ENCODE measurements at regions of chr1 and their contacts with region 1.

Region 1: GRCh38 chr1:174769961-174770549 is 229.7 kb upstream of the CACYBP start:
- DNase-seq: peak; percentile 37
- ATAC-seq: no peak
- H3K4me3 ChIP-seq: no peak overlapping the region
- H3K27ac ChIP-seq: no peak overlapping the region
- H3K4me1 ChIP-seq: no peaks in the 10 kb centered on the region
- H3K27me3 ChIP-seq: no peaks in the 10 kb centered on the region
- CTCF ChIP-seq: peak; percentile 62 to 84 (median 82); a peak in 5 of 6 replicates
- POLR2A ChIP-seq: no peak
- RAD21 ChIP-seq: peak; percentile 87

Region 2: GRCh38 chr1:174982971-174983689 is 213.1 kb after region 1 on chr1:
- CTCF ChIA-PET with region 1: no interaction called
- POLR2A ChIA-PET with region 1: no interaction called
- RAD21 ChIA-PET with region 1: interaction called in 1 of 2 experiments, 4 read pairs
- intact Hi-C with region 1: loop called (anchors 1 kb)
- DNase-seq: peak; percentile 36
- ATAC-seq: no peak
- H3K4me3 ChIP-seq: no peak overlapping the region
- H3K27ac ChIP-seq: no peak overlapping the region
- H3K4me1 ChIP-seq: no peaks in the 10 kb centered on the region
- H3K27me3 ChIP-seq: no peaks in the 10 kb centered on the region
- CTCF ChIP-seq: peak; percentile 49 to 79 (median 59); a peak in 5 of 6 replicates
- POLR2A ChIP-seq: no peak
- RAD21 ChIP-seq: peak; percentile 65

Region 3: GRCh38 chr1:174999216-174999925 is 229.3 kb after region 1 on chr1:
- CTCF ChIA-PET with region 1: interaction called, 9 read pairs
- POLR2A ChIA-PET with region 1: interaction called, 3 read pairs
- RAD21 ChIA-PET with region 1: no interaction called
- intact Hi-C with region 1: loop called (anchors 1 kb)
- DNase-seq: peak; percentile 97
- ATAC-seq: peak; percentile 83
- H3K4me3 ChIP-seq: peak overlapping the region; percentile 87 to 96
- H3K27ac ChIP-seq: peak overlapping the region; percentile 77
- H3K4me1 ChIP-seq: peaks cover 8 to 32% of the 10 kb centered on the region in 2 experiments
- H3K27me3 ChIP-seq: no peaks in the 10 kb centered on the region
- CTCF ChIP-seq: no peak
- POLR2A ChIP-seq: peak; percentile 92
- RAD21 ChIP-seq: no peak

Region 4: DNA sequence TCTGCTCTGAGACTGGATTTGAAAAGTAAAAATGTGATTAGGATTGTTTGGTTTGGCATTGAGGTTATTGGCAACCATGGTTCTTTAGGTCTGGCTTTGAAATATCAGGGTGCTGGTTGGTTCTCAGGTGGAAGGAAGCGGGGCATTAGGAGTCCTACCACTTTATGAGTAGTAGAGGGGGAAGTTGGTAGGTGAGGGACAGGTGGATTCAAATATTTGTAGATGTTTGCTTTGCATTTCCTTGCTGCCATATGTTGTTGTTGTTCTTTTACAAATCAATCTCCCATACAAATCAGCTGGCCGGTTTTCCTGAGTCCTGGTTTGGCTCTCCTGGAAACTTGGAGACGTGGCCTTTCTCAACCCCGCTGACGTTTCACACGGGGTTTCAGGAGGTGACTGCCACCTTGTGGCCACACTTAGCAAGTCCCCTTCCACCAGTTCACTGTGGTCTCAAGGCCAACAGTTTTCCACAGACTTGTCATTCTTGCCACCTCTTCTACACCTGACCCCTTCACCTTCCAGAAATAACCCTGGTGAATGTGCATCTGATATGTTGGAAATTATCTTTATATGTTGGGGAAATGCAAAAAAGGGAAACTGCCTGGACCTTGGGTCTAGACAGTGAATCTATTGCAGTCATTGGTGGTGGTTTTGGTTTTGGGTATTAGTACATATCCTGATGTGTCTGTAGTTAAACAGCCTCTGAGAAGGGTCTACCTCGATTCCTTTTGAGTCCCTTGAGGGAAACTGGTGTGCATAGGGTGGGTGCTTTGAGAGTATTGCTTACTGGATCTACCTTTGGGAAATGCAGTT is 549.6 kb after region 1 on chr1:
- CTCF ChIA-PET with region 1: no interaction called
- POLR2A ChIA-PET with region 1: no interaction called
- RAD21 ChIA-PET with region 1: no interaction called
- intact Hi-C with region 1: loop called (anchors 10 kb)
- DNase-seq: peak; percentile 66
- ATAC-seq: peak; percentile 96
- H3K4me3 ChIP-seq: no peak overlapping the region
- H3K27ac ChIP-seq: no peak overlapping the region
- H3K4me1 ChIP-seq: peaks cover 0 to 12% of the 10 kb centered on the region in 2 experiments; a peak in 2 of 4 replicates
- H3K27me3 ChIP-seq: no peaks in the 10 kb centered on the region
- CTCF ChIP-seq: peak; percentile 86 to 90 (median 87)
- POLR2A ChIP-seq: no peak
- RAD21 ChIP-seq: peak; percentile 97

Region 5: DNA sequence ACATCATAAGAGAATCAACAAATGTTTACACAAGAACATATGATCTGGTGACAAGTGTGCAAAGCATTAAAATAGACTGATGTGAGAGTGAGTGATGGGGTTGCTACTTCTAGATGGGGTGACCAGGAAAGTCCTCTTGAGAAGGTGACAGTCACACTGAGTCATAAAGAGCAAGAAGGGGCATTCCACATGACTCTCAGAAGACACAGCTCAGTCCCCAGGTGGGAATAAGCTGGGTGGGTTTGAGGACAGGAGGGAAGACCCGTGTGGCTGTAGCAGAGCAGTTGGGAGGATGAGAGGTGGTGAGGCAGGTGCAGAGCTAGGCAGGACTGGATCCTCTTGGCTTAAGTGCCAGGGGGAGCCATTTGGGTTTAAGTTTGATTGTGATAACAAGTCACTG is 920.2 kb after region 1 on chr1:
- CTCF ChIA-PET with region 1: no interaction called
- POLR2A ChIA-PET with region 1: no interaction called
- RAD21 ChIA-PET with region 1: no interaction called
- intact Hi-C with region 1: no loop called
- DNase-seq: no peak
- ATAC-seq: no peak
- H3K4me3 ChIP-seq: no peak overlapping the region
- H3K27ac ChIP-seq: no peak overlapping the region
- H3K4me1 ChIP-seq: no peaks in the 10 kb centered on the region
- H3K27me3 ChIP-seq: peaks cover 57% of the 10 kb centered on the region
- CTCF ChIP-seq: no peak
- POLR2A ChIP-seq: no peak
- RAD21 ChIP-seq: no peak